ENCODE measurements at regions of chr1 and their contacts with region 1.

Region 1: DNA sequence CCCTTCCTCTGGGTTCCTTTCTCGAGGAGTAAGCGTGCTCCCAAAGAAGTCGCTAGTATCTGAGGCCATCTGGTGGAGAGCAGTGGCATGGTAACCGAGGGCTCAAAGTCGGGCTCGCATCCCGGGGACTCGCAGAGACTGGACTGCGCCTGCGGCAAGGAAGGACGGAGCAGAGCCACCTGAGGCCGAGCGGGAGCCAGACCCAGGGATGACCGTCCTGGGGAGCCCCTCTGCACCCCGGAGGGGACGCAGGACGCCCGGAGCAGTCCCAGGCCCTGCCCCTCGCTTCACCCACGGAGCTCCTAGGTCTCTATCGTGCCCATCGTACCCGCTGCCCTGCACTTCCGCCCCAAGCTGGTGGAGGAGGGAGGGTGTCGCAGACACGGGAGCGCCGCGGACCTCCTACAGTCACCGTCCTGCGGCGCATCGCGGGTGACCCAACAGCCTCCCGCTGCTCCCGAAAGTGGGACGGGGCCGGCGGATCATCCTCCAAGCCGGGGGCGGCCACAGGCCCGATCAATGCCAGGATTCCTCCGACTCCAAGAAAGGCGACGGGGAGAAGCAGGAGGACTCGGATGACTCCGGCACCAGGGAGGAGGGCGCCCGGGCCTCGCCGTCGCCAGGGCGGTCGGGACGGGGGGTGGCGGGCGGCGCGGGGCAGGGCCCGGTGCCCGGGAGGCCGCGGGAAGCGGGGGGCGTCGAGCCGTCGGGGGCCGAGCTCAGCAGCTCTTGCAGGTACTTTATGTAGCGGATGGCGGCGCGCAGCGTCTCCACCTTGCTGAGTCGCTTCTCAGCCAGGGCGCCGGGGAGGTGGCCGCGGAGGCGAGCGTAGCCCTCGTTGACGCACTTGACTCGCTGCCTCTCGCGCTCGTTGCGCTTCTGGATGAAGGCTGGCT is 2.3 kb upstream of the CACNA1S start:
- DNase-seq: peak; percentile 58 to 78 (median 72)
- ATAC-seq: peak; percentile 90
- H3K4me3 ChIP-seq: peak overlapping the region; percentile 85
- H3K4me3 Mint-ChIP-seq: peak overlapping the region; percentile 86 to 94 (median 91)
- H3K27ac ChIP-seq: peak overlapping the region; percentile 65
- H3K27ac Mint-ChIP-seq: peak overlapping the region in 8 of 9 donors; percentile 74 to 92 (median 82)
- H3K4me1 ChIP-seq: peaks cover 0 to 7% of the 10 kb centered on the region in 2 donors
- H3K4me1 Mint-ChIP-seq: peaks cover 1 to 23% (median 14%) of the 10 kb centered on the region in 7 donors
- H3K27me3 ChIP-seq: no peaks in the 10 kb centered on the region
- H3K27me3 Mint-ChIP-seq: peaks cover 0 to 43% (median 0%) of the 10 kb centered on the region in 5 donors

Region 2: DNA sequence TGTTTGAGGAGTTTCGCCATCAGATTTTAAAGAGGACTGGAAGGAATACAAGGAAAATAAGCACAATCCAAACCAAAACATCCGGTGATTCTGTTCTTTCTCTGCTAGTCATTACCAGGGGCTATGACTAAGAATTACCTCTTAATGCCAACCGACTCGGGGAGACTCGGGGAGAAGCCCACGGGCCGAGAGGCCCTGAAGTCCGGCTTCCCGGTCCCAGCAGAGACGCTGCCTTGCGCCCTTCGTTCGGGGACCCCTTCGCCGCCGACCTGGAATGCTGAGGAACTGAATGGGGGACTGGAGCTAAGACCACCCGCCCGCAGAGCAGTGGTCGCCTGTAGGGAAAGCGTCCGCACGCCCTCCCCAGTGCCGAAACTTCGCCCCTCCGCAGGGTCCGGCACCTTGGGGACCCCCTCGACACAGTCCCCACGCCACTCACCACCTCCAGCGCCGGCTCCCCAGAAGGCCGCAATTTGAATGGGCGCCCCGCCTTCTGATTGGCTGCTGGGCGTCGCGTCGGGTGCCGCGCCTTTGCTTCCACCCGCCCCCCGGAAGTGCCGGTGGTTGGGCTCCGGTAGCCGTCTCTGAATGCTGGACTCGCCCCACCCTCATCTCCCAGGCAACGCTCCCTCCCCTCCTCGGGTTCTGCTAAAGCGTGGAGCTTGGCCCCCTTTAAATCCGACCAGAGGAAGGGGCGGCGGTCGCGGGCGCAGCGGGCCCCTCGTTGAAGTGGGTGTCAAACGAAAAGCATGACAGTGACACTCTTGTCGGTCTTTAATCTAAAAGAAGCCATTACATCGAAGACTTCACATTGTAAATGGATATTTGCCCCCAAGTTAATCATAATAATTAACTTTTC is 494.0 kb before region 1 on chr1 and contains the start of gene KIF14:
- CTCF ChIA-PET with region 1: interaction called, 3 read pairs
- POLR2A ChIA-PET with region 1: no interaction called
- intact Hi-C with region 1: loop called in 1 of 2 experiments (anchors 1 kb)
- DNase-seq: peak; percentile 81 to 94 (median 89)
- ATAC-seq: peak; percentile 99
- H3K4me3 ChIP-seq: peak within 1 kb of the TSS; percentile 58
- H3K4me3 Mint-ChIP-seq: peak within 1 kb of the TSS; percentile 86 to 99 (median 96)
- H3K27ac ChIP-seq: peak within 1 kb of the TSS; percentile 67
- H3K27ac Mint-ChIP-seq: peak within 1 kb of the TSS; percentile 74 to 96 (median 93)
- H3K4me1 ChIP-seq: peaks cover 6% of the 10 kb centered on the region in 2 donors
- H3K4me1 Mint-ChIP-seq: peaks cover 0 to 56% (median 15%) of the 10 kb centered on the region in 7 donors
- H3K27me3 ChIP-seq: peaks cover 0 to 4% of the 10 kb centered on the region in 2 donors
- H3K27me3 Mint-ChIP-seq: no peaks in the 10 kb centered on the region
- total RNA-seq, gene KIF14: 0.16 to 16.2 (median 0.42) TPM in 3 of 5 experiments, not detected in the others

Region 3: DNA sequence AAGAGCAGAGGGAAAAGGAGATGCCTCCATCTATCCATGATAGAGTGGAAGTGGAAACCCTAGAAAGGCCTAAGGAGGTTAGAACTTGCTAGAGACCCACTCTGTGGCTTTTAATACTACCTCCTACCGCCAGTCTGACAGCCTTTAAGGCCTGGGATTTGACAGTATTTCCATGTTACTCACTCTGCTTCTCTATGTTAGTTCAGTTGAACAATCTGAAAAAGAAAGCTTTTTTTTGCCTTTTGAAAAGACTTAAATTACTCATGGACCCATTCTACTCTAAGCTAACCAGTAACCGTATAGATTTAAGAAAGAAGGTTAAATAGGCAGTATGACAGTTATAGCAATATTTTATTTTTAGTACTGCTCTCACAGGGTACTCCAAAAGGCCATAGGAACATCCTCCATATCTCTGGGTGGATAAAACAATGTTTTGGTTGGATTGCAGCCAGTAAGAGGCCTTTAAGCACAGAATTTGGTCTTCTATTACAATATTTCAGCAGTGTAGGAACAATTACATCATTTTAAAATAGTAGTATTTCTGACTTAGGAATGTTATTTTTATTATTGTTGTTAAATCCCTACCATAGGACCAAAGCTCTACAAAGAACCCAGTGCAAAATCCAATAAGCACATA is 257.6 kb before region 1 on chr1:
- CTCF ChIA-PET with region 1: no interaction called
- POLR2A ChIA-PET with region 1: no interaction called
- intact Hi-C with region 1: no loop called
- DNase-seq: no peak
- ATAC-seq: no peak
- H3K4me3 ChIP-seq: no peak overlapping the region
- H3K4me3 Mint-ChIP-seq: no peak overlapping the region
- H3K27ac ChIP-seq: no peak overlapping the region
- H3K27ac Mint-ChIP-seq: no peak overlapping the region
- H3K4me1 ChIP-seq: no peaks in the 10 kb centered on the region
- H3K4me1 Mint-ChIP-seq: peaks cover 0 to 4% (median 0%) of the 10 kb centered on the region in 7 donors
- H3K27me3 ChIP-seq: no peaks in the 10 kb centered on the region
- H3K27me3 Mint-ChIP-seq: peaks cover 0 to 6% (median 0%) of the 10 kb centered on the region in 5 donors

Region 4: GRCh38 chr1:201042779-201043461 is 71.6 kb before region 1 on chr1:
- CTCF ChIA-PET with region 1: interaction called, 5 read pairs
- POLR2A ChIA-PET with region 1: no interaction called
- intact Hi-C with region 1: loop called in 1 of 2 experiments (anchors 1 kb)
- DNase-seq: peak; percentile 54 to 80 (median 69)
- ATAC-seq: peak; percentile 91
- H3K4me3 ChIP-seq: no peak overlapping the region
- H3K4me3 Mint-ChIP-seq: peak overlapping the region in 2 of 10 donors; percentile 18 to 35
- H3K27ac ChIP-seq: no peak overlapping the region
- H3K27ac Mint-ChIP-seq: peak overlapping the region in 4 of 9 donors; percentile 6 to 39 (median 22)
- H3K4me1 ChIP-seq: peaks cover 0 to 3% of the 10 kb centered on the region in 2 donors
- H3K4me1 Mint-ChIP-seq: peaks cover 0 to 5% (median 3%) of the 10 kb centered on the region in 7 donors
- H3K27me3 ChIP-seq: no peaks in the 10 kb centered on the region
- H3K27me3 Mint-ChIP-seq: peaks cover 0 to 16% (median 0%) of the 10 kb centered on the region in 5 donors

Region 5: GRCh38 chr1:201154389-201155165 is 40.1 kb after region 1 on chr1 and contains the start of gene TMEM9:
- CTCF ChIA-PET with region 1: interaction called, 5 read pairs
- POLR2A ChIA-PET with region 1: interaction called, 11 read pairs
- intact Hi-C with region 1: loop called (anchors 1 to 2 kb)
- DNase-seq: peak; percentile 94 to 99 (median 97)
- ATAC-seq: peak; percentile 97
- H3K4me3 ChIP-seq: peak within 1 kb of the TSS; percentile 48
- H3K4me3 Mint-ChIP-seq: peak within 1 kb of the TSS; percentile 86 to 94 (median 93)
- H3K27ac ChIP-seq: peak within 1 kb of the TSS; percentile 65
- H3K27ac Mint-ChIP-seq: peak within 1 kb of the TSS; percentile 83 to 96 (median 91)
- H3K4me1 ChIP-seq: peaks cover 7 to 14% of the 10 kb centered on the region in 2 donors
- H3K4me1 Mint-ChIP-seq: peaks cover 12 to 36% (median 20%) of the 10 kb centered on the region in 7 donors
- H3K27me3 ChIP-seq: no peaks in the 10 kb centered on the region
- H3K27me3 Mint-ChIP-seq: peaks cover 6 to 25% (median 9%) of the 10 kb centered on the region in 5 donors
- total RNA-seq, gene TMEM9: 15.3 to 24.5 (median 16.7) TPM

Region 6: GRCh38 chr1:201329286-201329685 is 214.8 kb after region 1 on chr1:
- CTCF ChIA-PET with region 1: no interaction called
- POLR2A ChIA-PET with region 1: no interaction called
- intact Hi-C with region 1: no loop called
- DNase-seq: no peak
- ATAC-seq: no peak
- H3K4me3 ChIP-seq: no peak overlapping the region
- H3K4me3 Mint-ChIP-seq: no peak overlapping the region
- H3K27ac ChIP-seq: no peak overlapping the region
- H3K27ac Mint-ChIP-seq: no peak overlapping the region
- H3K4me1 ChIP-seq: no peaks in the 10 kb centered on the region
- H3K4me1 Mint-ChIP-seq: peaks cover 0 to 2% (median 0%) of the 10 kb centered on the region in 7 donors
- H3K27me3 ChIP-seq: no peaks in the 10 kb centered on the region
- H3K27me3 Mint-ChIP-seq: no peaks in the 10 kb centered on the region

Measured in naive thymus-derived CD4-positive, alpha-beta T cell (primary cell).